Activated CD8-positive, alpha-beta memory T cell treated with anti-CD3 and anti-CD28 coated beads, Interleukin-2, amount 10 ng/mL, durations not matched to agents 7 days and 5 days (primary cell): ENCODE measurements at regions of chr22 and their contacts with region 1.

Region 1: DNA sequence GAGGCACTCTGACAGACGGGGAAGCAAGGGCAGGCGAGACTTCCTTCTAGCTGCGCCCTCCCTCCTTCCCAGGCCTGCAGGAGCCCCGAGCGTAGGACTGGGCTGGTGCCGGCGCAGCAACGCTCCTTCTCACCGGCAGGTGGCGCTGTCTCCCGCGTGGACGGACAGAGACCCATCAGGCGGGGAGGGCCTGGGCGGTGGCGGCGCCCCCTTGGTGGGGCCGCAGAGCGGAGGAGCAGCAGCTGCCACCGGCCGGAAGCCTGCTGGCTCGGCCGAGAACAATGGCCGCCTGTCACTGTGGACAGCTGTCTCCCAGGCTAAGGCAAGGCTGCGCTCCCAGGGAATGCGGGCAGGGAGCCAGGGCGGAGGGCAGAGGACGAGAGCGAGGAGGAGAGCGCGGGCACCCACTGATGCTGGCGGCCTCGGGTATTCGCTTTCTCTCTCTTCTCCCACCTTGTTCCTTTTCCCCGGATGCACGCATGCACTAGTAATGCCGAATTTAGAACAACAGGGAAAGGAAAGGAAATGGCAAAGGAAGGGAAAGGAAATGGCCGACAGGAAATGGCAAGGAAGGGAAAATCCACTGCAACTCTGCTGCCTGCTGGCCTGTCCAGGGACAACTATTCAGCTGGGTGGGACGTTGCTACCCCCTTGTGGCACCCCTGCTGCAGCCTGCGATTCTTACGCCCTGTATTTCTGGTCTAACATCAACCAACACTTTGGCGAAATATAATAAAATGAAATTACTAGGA is 14.4 kb downstream of the PPM1F start:
- DNase-seq: peak; percentile 92
- ATAC-seq: peak; percentile 98
- H3K4me3 Mint-ChIP-seq: peak overlapping the region; percentile 76
- H3K27ac Mint-ChIP-seq: peak overlapping the region; percentile 73
- H3K4me1 Mint-ChIP-seq: peaks cover 50% of the 10 kb centered on the region
- H3K27me3 Mint-ChIP-seq: no peaks in the 10 kb centered on the region

Region 2: GRCh38 chr22:21666786-21667185 is 271.5 kb before region 1 on chr22:
- CTCF ChIA-PET with region 1: interaction called, 10 read pairs
- DNase-seq: no peak
- ATAC-seq: no peak
- H3K4me3 Mint-ChIP-seq: peak overlapping the region; percentile 96
- H3K27ac Mint-ChIP-seq: peak overlapping the region; percentile 98
- H3K4me1 Mint-ChIP-seq: peaks cover 27% of the 10 kb centered on the region
- H3K27me3 Mint-ChIP-seq: no peaks in the 10 kb centered on the region

Region 3: GRCh38 chr22:21712894-21713712 is 225.1 kb before region 1 on chr22:
- CTCF ChIA-PET with region 1: interaction called, 16 read pairs
- DNase-seq: peak; percentile 74
- ATAC-seq: peak; percentile 89
- H3K4me3 Mint-ChIP-seq: no peak overlapping the region
- H3K27ac Mint-ChIP-seq: no peak overlapping the region
- H3K4me1 Mint-ChIP-seq: peaks cover 12% of the 10 kb centered on the region
- H3K27me3 Mint-ChIP-seq: no peaks in the 10 kb centered on the region

Region 4: DNA sequence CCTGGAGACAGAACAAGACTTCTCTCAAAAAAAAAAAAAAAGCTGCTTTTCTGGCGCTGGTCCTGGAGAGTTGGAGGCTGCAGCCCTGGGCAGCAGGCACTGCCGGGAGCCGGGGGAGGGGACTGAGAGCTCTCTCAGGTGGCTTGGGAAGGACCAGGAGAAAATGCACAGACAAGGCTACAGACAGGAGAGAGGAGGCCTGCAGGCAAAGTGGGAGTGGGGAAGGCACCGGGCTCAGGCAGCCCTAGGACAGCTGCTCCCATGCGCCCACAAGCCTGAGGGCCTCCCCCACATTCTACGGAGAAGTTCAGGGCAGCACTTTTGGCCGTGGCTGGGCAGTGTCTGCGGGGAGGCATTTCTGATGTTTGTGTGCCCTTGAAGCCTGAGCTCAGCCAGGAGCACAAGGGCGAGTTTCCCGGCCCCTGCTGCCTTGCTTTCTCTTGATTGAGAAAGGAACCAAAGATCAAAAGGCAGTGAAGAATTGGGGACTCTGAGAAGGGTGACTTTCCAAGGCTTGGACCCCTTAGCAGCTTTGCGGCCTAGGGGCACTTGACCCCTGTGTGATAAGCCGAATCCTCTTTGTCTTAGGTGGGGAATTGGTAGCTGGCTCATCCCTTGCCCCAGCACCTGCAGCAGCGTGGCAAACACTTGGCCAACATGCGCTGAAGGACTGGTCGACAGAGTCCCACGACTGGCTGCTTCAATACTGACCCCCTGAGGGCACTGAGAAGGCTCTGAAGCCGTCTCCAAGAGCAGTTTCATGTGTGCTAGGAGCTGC is 20.9 kb before region 1 on chr22:
- CTCF ChIA-PET with region 1: interaction called, 18 read pairs
- DNase-seq: no peak
- ATAC-seq: no peak
- H3K4me3 Mint-ChIP-seq: no peak overlapping the region
- H3K27ac Mint-ChIP-seq: no peak overlapping the region
- H3K4me1 Mint-ChIP-seq: no peaks in the 10 kb centered on the region
- H3K27me3 Mint-ChIP-seq: no peaks in the 10 kb centered on the region

Region 5: GRCh38 chr22:21952586-21953571 is 14.6 kb after region 1 on chr22 and contains the start of gene PPM1F:
- CTCF ChIA-PET with region 1: interaction called, 159 read pairs
- DNase-seq: peak; percentile 90
- ATAC-seq: peak; percentile 91
- H3K4me3 Mint-ChIP-seq: peak within 1 kb of the TSS; percentile 74
- H3K27ac Mint-ChIP-seq: peak within 1 kb of the TSS; percentile 68
- H3K4me1 Mint-ChIP-seq: peaks cover 14% of the 10 kb centered on the region
- H3K27me3 Mint-ChIP-seq: peaks cover 3% of the 10 kb centered on the region
- total RNA-seq, gene PPM1F: 14.4 to 22.9 TPM

Region 6: GRCh38 chr22:21982338-21982965 is 44.2 kb after region 1 on chr22 and contains the start of gene TOP3B:
- CTCF ChIA-PET with region 1: interaction called, 12 read pairs
- DNase-seq: peak; percentile 87
- ATAC-seq: peak; percentile 97
- H3K4me3 Mint-ChIP-seq: peak within 1 kb of the TSS; percentile 88
- H3K27ac Mint-ChIP-seq: peak within 1 kb of the TSS; percentile 86
- H3K4me1 Mint-ChIP-seq: peaks cover 30% of the 10 kb centered on the region
- H3K27me3 Mint-ChIP-seq: no peaks in the 10 kb centered on the region
- total RNA-seq, gene TOP3B: 46.6 to 50.4 TPM